ENCODE measurements at regions of chr13 and their contacts with region 1.

Region 1: DNA sequence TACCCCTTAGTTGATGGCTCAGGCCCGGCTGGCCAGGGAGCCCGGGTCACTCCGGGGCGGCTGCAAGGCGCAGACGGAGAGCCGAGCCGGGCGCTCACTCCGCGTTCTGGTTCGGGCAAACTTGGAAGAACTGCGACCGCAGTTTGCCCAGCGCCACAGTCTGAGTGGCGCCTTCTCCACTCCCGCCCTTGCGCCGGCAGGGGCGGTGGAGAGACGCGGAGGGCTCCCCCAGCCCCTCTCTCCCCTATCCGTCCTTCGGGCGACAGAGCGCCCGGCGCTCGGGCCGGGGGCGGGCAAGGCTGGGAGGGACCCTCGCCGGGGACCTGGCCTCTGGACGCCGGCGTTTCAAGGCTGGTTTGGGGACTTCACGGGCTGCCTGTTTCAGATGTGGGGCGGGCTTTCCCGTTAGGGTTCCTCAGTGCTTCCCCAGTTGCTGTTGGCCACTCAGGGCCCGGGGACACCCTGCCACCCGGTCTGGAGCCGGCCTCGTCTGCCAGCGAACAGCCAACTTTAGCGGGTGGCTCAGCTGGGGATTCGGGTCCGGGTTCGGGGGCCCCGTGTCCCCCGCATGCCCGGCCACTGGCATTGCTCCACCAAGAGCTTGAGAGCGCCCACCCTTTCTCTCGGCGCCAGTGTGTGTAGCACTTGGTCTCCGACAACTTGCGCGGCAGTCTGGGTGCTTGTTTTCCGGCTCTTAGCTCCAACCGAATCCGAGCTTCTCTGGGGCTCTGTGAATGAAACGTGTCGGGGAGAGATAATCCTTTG is 1.5 kb downstream of the GPC6 start:
- DNase-seq: peak in 1 of 2 donors; percentile 36
- ATAC-seq: peak; percentile 36 to 63
- H3K4me3 ChIP-seq: peak overlapping the region; percentile 50 to 52 (median 51)
- H3K27ac ChIP-seq: peak overlapping the region; percentile 57 to 67 (median 58)
- H3K4me1 ChIP-seq: peaks cover 0 to 16% of the 10 kb centered on the region in 2 donors
- H3K27me3 ChIP-seq: peaks cover 7 to 22% (median 21%) of the 10 kb centered on the region in 3 donors
- CTCF ChIP-seq: peak in 2 of 5 experiments; percentile 8 to 24
- POLR2A ChIP-seq: peak in 1 of 2 donors; percentile 5

Region 2: DNA sequence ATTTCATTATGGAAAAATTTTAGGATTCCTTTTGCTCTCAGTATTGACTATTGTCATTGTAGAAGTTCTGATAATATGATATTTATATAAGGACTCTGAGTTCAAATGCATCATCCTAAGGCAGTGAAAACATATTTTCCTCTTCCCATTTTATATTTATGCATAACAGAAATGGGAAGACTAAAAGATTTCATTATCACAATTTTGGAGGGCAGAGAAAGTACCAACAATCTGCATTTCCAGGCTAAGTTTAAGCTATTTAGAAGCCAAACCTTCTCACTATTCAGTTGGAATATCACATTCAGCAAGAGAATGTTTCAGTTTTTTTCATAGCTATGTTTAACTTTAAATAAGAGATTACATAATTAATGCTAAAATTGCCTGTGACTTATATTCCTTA is 559.9 kb before region 1 on chr13:
- in situ Hi-C with region 1: no loop called
- intact Hi-C with region 1: no loop called
- DNase-seq: no peak
- ATAC-seq: no peak
- H3K4me3 ChIP-seq: no peak overlapping the region
- H3K27ac ChIP-seq: no peak overlapping the region
- H3K4me1 ChIP-seq: no peaks in the 10 kb centered on the region
- H3K27me3 ChIP-seq: no peaks in the 10 kb centered on the region
- CTCF ChIP-seq: no peak
- POLR2A ChIP-seq: no peak

Region 3: GRCh38 chr13:92833071-92833470 is 395.0 kb before region 1 on chr13:
- in situ Hi-C with region 1: no loop called
- intact Hi-C with region 1: no loop called
- DNase-seq: no peak
- ATAC-seq: no peak
- H3K4me3 ChIP-seq: no peak overlapping the region
- H3K27ac ChIP-seq: no peak overlapping the region
- H3K4me1 ChIP-seq: no peaks in the 10 kb centered on the region
- H3K27me3 ChIP-seq: no peaks in the 10 kb centered on the region
- CTCF ChIP-seq: no peak
- POLR2A ChIP-seq: no peak

Region 4: GRCh38 chr13:93116809-93117208 is 111.3 kb before region 1 on chr13:
- in situ Hi-C with region 1: loop called in 1 of 4 experiments (anchors 25 kb)
- intact Hi-C with region 1: no loop called
- DNase-seq: no peak
- ATAC-seq: no peak
- H3K4me3 ChIP-seq: no peak overlapping the region
- H3K27ac ChIP-seq: no peak overlapping the region
- H3K4me1 ChIP-seq: no peaks in the 10 kb centered on the region
- H3K27me3 ChIP-seq: no peaks in the 10 kb centered on the region
- CTCF ChIP-seq: no peak
- POLR2A ChIP-seq: no peak

Region 5: DNA sequence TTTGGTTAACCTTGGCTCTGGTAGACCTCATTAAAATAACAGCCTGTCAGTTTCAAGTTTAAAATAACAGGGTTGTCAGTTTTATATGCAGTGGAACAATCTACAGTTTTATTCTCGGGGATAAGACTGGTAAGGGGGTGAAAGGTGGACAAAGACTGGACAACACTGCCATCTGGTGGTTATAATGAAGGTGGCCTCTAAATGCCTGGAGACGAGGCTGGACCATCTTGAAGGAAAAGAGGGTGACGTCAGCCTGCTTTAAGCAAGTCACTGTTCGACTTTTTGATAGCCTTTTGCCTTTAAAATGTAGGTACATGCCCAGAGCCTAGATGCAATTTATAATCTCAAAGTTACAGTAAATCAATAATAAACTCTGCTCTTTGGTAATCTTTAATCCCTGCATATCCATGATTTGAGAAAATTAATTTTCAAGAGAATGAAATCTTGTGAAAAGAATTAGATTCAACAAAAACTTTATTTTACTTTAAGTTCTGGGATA is 1134.4 kb after region 1 on chr13:
- in situ Hi-C with region 1: loop called in 1 of 4 experiments (anchors 25 kb)
- intact Hi-C with region 1: no loop called
- DNase-seq: peak in 1 of 2 donors; percentile 30
- ATAC-seq: peak; percentile 65 to 76
- H3K4me3 ChIP-seq: no peak overlapping the region
- H3K27ac ChIP-seq: no peak overlapping the region
- H3K4me1 ChIP-seq: no peaks in the 10 kb centered on the region
- H3K27me3 ChIP-seq: no peaks in the 10 kb centered on the region
- CTCF ChIP-seq: peak; percentile 59 to 77 (median 68)
- POLR2A ChIP-seq: no peak

Measured in gastrocnemius medialis (tissue), 4 donors.